Body of pancreas (tissue), 4 donors: ENCODE measurements at regions of chr6 and their contacts with region 1.

Region 1: DNA sequence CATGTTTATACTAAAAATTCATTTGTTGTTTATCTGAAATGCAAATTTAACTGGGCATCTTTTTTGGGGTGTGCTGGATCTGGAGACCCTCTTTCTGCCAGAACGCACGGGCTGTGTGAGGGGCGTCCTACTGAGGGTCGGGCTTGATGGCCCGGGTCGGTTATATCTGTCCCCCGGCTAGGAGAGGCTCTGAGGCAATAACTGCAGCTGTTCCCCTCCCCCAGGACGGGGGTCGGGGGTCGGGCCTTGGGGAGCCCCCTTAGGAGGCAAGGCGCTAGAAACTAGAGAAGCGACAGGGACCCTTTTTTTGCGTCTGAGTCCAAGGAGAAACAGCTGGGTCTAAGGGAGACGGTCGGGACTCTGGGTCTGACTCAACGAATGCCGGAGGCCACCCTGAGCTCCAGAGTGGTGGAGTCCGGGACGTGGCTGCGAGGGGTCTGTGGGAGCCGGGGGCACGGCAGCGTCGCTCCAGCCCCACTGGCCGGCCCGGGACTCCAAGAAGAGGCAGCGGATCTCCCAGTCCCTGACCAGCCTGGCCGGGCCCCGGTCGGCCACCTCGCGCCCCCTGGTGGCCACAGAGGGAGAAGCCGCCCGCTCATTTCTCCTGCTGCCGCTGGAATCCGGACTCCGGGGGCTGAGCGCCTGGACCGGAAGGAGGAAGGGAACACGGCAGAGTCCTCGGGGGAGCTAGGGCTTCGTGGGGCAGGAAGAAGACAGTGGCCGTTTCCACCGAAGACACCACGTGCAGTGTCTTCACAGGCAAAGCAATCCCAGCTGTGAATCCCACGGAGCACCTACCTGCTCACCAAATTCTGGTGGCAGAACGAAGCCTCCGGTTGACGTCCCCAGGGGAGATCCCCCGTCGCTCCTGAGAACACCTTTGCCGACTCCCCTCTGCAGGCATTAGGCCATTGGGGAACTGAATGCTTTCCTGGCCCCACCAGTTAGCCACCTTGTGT is 24.0 kb upstream of the SCML4 start:
- DNase-seq: peak; percentile 88 to 91 (median 90)
- ATAC-seq: peak; percentile 99
- H3K4me3 ChIP-seq: peak overlapping the region in 1 of 2 donors; percentile 5
- H3K27ac ChIP-seq: peak overlapping the region in 1 of 4 donors; percentile 2
- H3K4me1 ChIP-seq: peaks cover 14% of the 10 kb centered on the region
- H3K27me3 ChIP-seq: no peaks in the 10 kb centered on the region
- CTCF ChIP-seq: peak; percentile 94 to 97 (median 96)
- POLR2A ChIP-seq: peak in 2 of 3 donors; percentile 40 to 49

Region 2: DNA sequence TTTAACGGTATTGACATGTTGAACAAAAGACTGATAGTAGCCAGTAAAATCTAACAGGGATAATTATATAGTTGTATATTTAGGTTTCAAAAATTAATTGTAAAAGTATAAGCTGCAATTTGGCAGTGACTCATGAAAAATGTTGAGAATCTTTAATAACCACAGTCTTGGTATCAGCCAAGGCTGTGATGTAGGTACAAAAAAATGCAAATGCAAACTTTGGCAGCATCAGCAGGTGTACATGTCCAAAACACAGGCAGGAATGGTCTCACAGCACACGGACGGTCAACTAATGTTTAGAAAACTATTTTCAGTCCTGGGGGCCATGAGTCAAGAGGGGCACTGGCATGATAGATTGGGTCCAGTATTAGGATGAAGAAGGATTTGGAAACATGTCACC is 674.3 kb before region 1 on chr6:
- intact Hi-C with region 1: no loop called
- DNase-seq: no peak
- ATAC-seq: no peak
- H3K4me3 ChIP-seq: no peak overlapping the region
- H3K27ac ChIP-seq: no peak overlapping the region
- H3K4me1 ChIP-seq: no peaks in the 10 kb centered on the region
- H3K27me3 ChIP-seq: no peaks in the 10 kb centered on the region
- CTCF ChIP-seq: no peak
- POLR2A ChIP-seq: no peak

Region 3: GRCh38 chr6:107443608-107444267 is 404.4 kb before region 1 on chr6:
- intact Hi-C with region 1: no loop called
- DNase-seq: no peak
- ATAC-seq: no peak
- H3K4me3 ChIP-seq: no peak overlapping the region
- H3K27ac ChIP-seq: no peak overlapping the region
- H3K4me1 ChIP-seq: no peaks in the 10 kb centered on the region
- H3K27me3 ChIP-seq: no peaks in the 10 kb centered on the region
- CTCF ChIP-seq: no peak
- POLR2A ChIP-seq: no peak

Region 4: DNA sequence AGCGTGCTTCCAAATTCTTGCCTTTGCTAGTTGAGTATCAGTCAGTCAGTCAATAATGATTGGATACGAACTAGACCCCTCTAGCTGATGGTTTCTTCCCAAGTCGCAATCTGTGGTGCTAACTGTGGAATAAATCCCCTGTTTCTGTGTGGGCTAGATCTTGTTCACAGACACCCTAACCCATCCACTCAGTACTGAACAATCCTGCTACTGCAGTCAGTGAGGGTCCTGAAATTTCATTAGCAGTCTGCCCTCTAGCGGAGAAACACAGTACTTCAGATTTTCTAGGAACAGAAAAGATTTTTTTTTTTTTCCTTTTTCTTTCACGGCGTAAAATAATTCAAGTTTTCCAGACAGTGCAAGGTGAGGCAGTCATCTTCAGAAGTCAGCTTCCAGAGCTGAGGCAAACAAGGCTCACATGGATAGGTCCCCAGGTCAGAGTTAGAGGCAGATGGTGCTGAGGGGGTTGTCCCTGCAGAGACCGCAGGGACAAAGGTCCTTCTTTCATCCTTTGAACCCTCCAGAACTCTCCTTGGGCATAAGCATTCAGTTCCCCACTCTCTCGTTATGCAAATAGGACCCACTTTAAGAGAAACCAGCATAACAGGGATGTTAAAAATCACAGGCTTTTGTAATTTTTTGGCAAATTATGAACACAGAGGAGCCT is 143.6 kb before region 1 on chr6:
- intact Hi-C with region 1: loop called (anchors 10 kb)
- DNase-seq: peak in 2 of 4 donors; percentile 21 to 35
- ATAC-seq: peak; percentile 66
- H3K4me3 ChIP-seq: no peak overlapping the region
- H3K27ac ChIP-seq: no peak overlapping the region
- H3K4me1 ChIP-seq: no peaks in the 10 kb centered on the region
- H3K27me3 ChIP-seq: no peaks in the 10 kb centered on the region
- CTCF ChIP-seq: peak; percentile 71 to 88 (median 76)
- POLR2A ChIP-seq: no peak

Region 5: GRCh38 chr6:107793191-107793590 is 54.9 kb before region 1 on chr6:
- intact Hi-C with region 1: loop called (anchors 10 kb)
- DNase-seq: no peak
- ATAC-seq: no peak
- H3K4me3 ChIP-seq: no peak overlapping the region
- H3K27ac ChIP-seq: no peak overlapping the region
- H3K4me1 ChIP-seq: no peaks in the 10 kb centered on the region
- H3K27me3 ChIP-seq: no peaks in the 10 kb centered on the region
- CTCF ChIP-seq: no peak
- POLR2A ChIP-seq: no peak